H1 (cell line): ENCODE measurements at regions of chr4 and their contacts with region 1.

Region 1: DNA sequence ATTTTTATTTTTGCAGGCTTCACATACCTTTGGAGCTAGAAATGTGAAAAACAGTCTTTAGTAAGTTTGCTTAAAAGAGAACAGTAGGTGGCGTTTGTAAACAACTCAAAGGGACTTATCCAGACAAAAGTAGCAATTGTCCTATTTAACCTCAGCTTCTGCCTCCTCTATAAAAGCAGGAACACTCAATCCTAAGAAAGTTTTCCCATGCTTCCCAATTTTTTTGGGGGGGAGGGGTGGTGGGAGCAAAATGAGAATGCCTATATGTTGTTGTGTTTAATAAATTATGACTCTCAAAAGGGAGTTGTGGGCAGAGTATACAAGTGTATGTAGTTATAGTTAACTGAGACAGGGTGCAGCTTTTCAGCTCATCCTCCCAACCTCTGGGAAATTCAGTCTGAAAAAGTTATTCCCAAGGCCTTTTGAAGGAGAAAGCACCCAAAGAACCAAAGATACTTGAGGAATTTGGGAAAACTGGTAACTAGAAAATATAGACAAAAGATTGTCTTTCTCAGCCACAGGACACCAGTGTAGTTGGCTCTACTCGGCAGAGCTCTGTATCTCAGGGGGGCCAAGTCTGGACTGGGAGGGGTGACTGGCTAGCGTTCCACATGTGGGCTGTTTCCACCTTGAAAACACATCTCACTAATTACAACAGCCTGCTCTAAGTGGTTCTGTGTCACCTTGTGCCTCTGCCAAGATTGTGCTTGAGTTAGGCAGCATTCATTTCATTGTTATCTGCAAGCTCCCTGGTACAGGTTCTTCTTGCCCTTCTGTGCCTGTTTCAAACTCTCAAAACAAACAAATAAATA is 2.8 kb downstream of the SFRP2 start:
- DNase-seq: no peak
- H3K4me3 ChIP-seq: peak overlapping the region; percentile 80 to 94 (median 94)
- H3K27ac ChIP-seq: no peak overlapping the region
- H3K4me1 ChIP-seq: peaks cover 1 to 17% (median 9%) of the 10 kb centered on the region in 4 experiments
- H3K27me3 ChIP-seq: no peaks in the 10 kb centered on the region
- CTCF ChIP-seq: peak in 2 of 3 experiments; percentile 17 to 37; a peak in 2 of 4 replicates
- EP300 ChIP-seq: no peak
- POLR2A ChIP-seq: peak in 1 of 2 experiments; percentile 33; a peak in 1 of 3 replicates
- RAD21 ChIP-seq: peak in 1 of 2 experiments; percentile 30; a peak in 2 of 4 replicates

Region 2: GRCh38 chr4:153759407-153760316 is 26.5 kb before region 1 on chr4 and contains the start of gene RNF175:
- CTCF ChIA-PET with region 1: interaction called, 12 read pairs
- POLR2A ChIA-PET with region 1: interaction called, 14 read pairs
- DNase-seq: peak in 1 of 2 experiments; percentile 71
- H3K4me3 ChIP-seq: peak within 1 kb of the TSS; percentile 70 to 87 (median 72)
- H3K27ac ChIP-seq: peak within 1 kb of the TSS; percentile 60; the same call in 1 of the 2 replicates
- H3K4me1 ChIP-seq: peaks cover 11 to 27% (median 21%) of the 10 kb centered on the region in 4 experiments; a peak in 6 of 7 replicates
- H3K27me3 ChIP-seq: peaks cover 0 to 4% (median 0%) of the 10 kb centered on the region in 4 experiments; a peak in 5 of 7 replicates
- CTCF ChIP-seq: no peak
- EP300 ChIP-seq: no peak
- POLR2A ChIP-seq: no peak; a peak in 1 of 3 replicates
- RAD21 ChIP-seq: no peak
- total RNA-seq, gene RNF175: 7.3 and 7.9 TPM in 2 replicates

Region 3: DNA sequence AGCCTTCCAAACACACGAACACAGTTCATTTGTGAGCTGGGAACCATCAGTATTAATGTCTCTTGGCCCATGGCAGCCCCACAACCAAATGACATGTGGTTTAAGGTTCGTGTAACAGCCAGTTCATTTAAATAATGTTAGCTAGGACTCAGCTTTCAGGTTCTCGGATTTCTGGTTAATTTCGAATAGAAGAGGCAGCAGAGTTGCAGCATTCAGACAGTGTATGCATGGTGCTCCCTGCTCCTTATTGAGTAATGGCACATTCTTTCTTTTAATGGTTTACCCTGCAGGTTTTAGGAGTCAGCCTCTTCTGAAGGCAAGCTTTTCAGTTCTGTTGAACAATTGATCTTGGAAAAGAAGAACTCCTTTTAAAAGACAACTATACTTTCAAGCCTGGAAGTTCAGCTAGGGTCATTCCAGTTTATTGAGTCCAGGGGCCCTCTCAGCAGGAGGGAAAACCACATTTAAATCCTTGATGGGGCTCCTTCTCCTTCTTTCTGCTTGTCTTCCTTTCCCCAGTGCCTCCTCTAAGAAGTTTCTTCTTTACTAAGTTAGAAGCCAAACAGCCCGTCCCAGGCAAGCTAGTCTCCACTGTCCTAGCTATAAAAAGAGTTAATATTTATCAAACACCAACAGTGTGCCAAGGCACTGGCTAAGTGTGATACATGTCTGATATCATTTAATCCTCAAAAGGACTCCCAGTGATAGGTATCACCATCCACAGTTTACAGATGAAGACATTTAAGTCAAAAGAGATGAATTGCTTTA is 21.3 kb before region 1 on chr4:
- CTCF ChIA-PET with region 1: interaction called, 12 read pairs
- POLR2A ChIA-PET with region 1: interaction called, 14 read pairs
- DNase-seq: no peak
- H3K4me3 ChIP-seq: no peak overlapping the region
- H3K27ac ChIP-seq: no peak overlapping the region
- H3K4me1 ChIP-seq: peaks cover 0 to 10% (median 6%) of the 10 kb centered on the region in 4 experiments; a peak in 5 of 7 replicates
- H3K27me3 ChIP-seq: no peaks in the 10 kb centered on the region
- CTCF ChIP-seq: no peak
- EP300 ChIP-seq: no peak
- POLR2A ChIP-seq: no peak
- RAD21 ChIP-seq: no peak

Region 4: DNA sequence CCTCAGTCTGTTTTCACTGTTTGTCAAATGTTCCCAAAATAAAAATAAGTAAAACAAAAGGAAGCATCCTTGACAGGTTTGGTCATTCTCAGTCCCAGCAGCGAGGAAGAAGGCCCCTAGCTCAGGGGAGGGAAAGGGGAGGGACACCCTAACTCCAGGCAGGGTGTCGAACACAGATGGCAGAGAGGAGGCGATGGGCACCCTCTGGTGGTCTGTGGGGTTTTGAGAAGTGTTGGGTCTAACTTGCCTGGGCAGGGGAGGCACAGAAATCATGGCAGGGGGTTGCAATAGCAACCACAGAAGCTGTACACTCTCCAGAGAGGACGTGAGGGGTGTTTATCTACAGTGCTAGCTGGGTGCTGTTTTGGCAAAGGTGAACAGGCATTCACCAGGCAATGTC is 232.5 kb after region 1 on chr4:
- CTCF ChIA-PET with region 1: interaction called, 117 read pairs
- POLR2A ChIA-PET with region 1: interaction called, 14 read pairs
- DNase-seq: peak; percentile 39 to 76
- H3K4me3 ChIP-seq: no peak overlapping the region
- H3K27ac ChIP-seq: no peak overlapping the region
- H3K4me1 ChIP-seq: no peaks in the 10 kb centered on the region
- H3K27me3 ChIP-seq: no peaks in the 10 kb centered on the region
- CTCF ChIP-seq: peak; percentile 70 to 79 (median 70)
- EP300 ChIP-seq: no peak
- POLR2A ChIP-seq: no peak
- RAD21 ChIP-seq: peak; percentile 87 to 88